ENCODE measurements at regions of chr14 and their contacts with region 1.

Region 1: DNA sequence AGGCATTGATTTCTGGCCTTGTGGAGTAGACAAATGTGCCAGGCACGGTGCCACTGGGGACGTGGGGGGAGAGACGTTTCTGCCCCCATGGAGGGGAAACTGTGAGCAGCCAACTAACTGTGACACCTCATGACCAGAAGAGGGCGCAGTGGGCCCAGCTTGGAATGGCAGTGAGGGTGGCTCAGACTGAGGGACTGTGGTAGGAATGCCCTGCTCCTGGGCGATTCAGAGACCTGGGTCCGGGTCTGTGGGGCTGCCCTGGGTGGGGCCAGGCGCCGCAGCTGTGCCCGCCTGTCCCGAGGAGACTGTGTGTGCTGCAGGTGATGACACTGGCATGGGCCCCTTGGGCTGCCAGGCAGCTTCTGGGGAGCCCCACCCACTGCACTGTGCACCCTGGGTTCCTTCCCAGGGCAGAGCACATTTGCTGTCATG is 60.6 kb downstream of the SLC25A47 start:
- DNase-seq: peak; percentile 52 to 82 (median 73)
- ATAC-seq: peak; percentile 82 to 89 (median 85)
- H3K4me3 ChIP-seq: no peak overlapping the region
- H3K27ac ChIP-seq: no peak overlapping the region
- H3K4me1 ChIP-seq: peaks cover 0 to 1% (median 1%) of the 10 kb centered on the region in 3 donors
- H3K27me3 ChIP-seq: no peaks in the 10 kb centered on the region
- CTCF ChIP-seq: peak; percentile 59 to 83 (median 76)

Region 2: GRCh38 chr14:101628471-101628966 is 1244.8 kb after region 1 on chr14:
- intact Hi-C with region 1: loop called in 1 of 3 experiments (anchors 5 kb)
- DNase-seq: peak; percentile 56 to 93 (median 81)
- ATAC-seq: peak; percentile 96 to 100 (median 98)
- H3K4me3 ChIP-seq: peak overlapping the region in 1 of 4 donors; percentile 8
- H3K27ac ChIP-seq: no peak overlapping the region
- H3K4me1 ChIP-seq: peaks cover 0 to 4% (median 0%) of the 10 kb centered on the region in 3 donors
- H3K27me3 ChIP-seq: no peaks in the 10 kb centered on the region
- CTCF ChIP-seq: peak; percentile 99 to 100 (median 99)

Measured in pancreas (tissue), 10 donors.